ENCODE measurements at regions of chr7 and their contacts with region 1.

Region 1: GRCh38 chr7:137670199-137671071 is 176.3 kb downstream of the DGKI start:
- DNase-seq: peak; percentile 35
- ATAC-seq: peak; percentile 77
- H3K4me3 ChIP-seq: no peak overlapping the region
- H3K27ac ChIP-seq: no peak overlapping the region
- H3K4me1 ChIP-seq: 0 out of 2 replicates have a peak, but pooled peaks cover 2% of the 10 kb centered on the region
- H3K27me3 ChIP-seq: no peaks in the 10 kb centered on the region
- CTCF ChIP-seq: no peak
- EP300 ChIP-seq: no peak
- POLR2A ChIP-seq: no peak
- RAD21 ChIP-seq: peak; percentile 19; the same call in 1 of the 2 replicates

Region 2: GRCh38 chr7:137687556-137688280 is 17.3 kb after region 1 on chr7:
- CTCF ChIA-PET with region 1: interaction called, 10 read pairs
- POLR2A ChIA-PET with region 1: interaction called, 17 read pairs
- RAD21 ChIA-PET with region 1: interaction called, 26 read pairs
- SMC1A ChIA-PET with region 1: interaction called, 63 read pairs
- in situ Hi-C with region 1: no loop called
- intact Hi-C with region 1: no loop called
- DNase-seq: no peak
- ATAC-seq: no peak
- H3K4me3 ChIP-seq: no peak overlapping the region
- H3K27ac ChIP-seq: no peak overlapping the region
- H3K4me1 ChIP-seq: no peaks in the 10 kb centered on the region
- H3K27me3 ChIP-seq: no peaks in the 10 kb centered on the region
- CTCF ChIP-seq: no peak
- EP300 ChIP-seq: no peak
- POLR2A ChIP-seq: no peak
- RAD21 ChIP-seq: no peak

Region 3: DNA sequence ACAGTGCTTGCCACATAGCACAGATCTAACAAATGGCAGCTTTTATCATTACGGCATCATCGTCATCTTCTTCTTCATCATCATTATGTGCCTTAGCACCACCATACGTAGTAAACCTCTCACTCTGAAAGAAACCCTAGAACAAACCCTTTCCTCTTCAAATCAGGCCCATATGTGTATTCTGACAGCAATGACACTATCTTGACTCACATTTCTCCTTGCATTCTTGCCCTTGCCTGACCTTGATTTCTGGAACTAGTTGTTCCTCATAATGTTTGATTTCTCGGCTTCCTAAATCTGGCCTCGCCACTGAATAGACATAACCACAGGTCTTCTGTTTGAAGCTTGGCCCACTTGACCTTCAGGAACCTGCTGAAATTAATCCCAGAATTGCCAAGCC is 61.0 kb after region 1 on chr7:
- CTCF ChIA-PET with region 1: interaction called, 3 read pairs
- POLR2A ChIA-PET with region 1: interaction called, 3 read pairs
- RAD21 ChIA-PET with region 1: interaction called, 7 read pairs
- SMC1A ChIA-PET with region 1: interaction called, 23 read pairs
- in situ Hi-C with region 1: no loop called
- intact Hi-C with region 1: no loop called
- DNase-seq: no peak
- ATAC-seq: no peak
- H3K4me3 ChIP-seq: no peak overlapping the region
- H3K27ac ChIP-seq: no peak overlapping the region
- H3K4me1 ChIP-seq: no peaks in the 10 kb centered on the region
- H3K27me3 ChIP-seq: no peaks in the 10 kb centered on the region
- CTCF ChIP-seq: no peak
- EP300 ChIP-seq: no peak
- POLR2A ChIP-seq: no peak
- RAD21 ChIP-seq: no peak

Region 4: DNA sequence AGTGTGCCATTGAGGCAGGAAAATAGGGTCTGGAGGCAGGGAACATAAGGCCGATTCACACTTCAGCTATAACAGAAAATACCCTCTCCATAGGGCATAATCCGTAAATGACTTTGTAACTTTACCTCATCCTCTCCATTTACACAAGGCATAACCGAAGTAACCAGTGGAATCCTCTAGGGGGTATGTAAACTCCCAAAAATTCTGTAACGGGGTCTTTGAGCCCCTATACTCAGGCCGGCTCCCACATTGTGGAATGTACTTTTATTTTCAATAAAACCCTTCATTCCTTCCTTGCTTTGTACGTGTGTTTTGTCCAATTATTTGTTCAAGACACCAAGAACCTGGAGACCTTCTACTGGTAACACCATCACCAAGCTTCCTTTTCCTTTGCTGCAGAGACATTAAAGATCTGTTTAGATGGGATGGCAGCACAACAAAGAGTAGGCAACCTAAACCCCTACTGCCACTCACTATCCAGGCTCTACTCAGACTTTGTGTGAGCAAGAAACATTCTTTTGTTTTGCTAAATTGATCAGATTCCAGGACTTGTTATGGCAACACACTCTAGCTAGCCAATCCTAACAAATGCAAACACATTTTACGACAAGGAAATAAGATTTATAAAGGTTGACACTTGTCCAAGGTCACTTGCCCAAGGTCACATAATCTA is 77.1 kb after region 1 on chr7:
- CTCF ChIA-PET with region 1: interaction called, 3 read pairs
- POLR2A ChIA-PET with region 1: interaction called, 3 read pairs
- RAD21 ChIA-PET with region 1: interaction called, 10 read pairs
- SMC1A ChIA-PET with region 1: interaction called, 19 read pairs
- in situ Hi-C with region 1: no loop called
- intact Hi-C with region 1: no loop called
- DNase-seq: no peak
- ATAC-seq: no peak
- H3K4me3 ChIP-seq: no peak overlapping the region
- H3K27ac ChIP-seq: no peak overlapping the region
- H3K4me1 ChIP-seq: no peaks in the 10 kb centered on the region
- H3K27me3 ChIP-seq: no peaks in the 10 kb centered on the region
- CTCF ChIP-seq: no peak
- EP300 ChIP-seq: no peak
- POLR2A ChIP-seq: no peak
- RAD21 ChIP-seq: no peak

Region 5: GRCh38 chr7:137772748-137773147 is 102.3 kb after region 1 on chr7:
- CTCF ChIA-PET with region 1: interaction called, 5 read pairs
- POLR2A ChIA-PET with region 1: interaction called, 27 read pairs
- RAD21 ChIA-PET with region 1: interaction called, 18 read pairs
- SMC1A ChIA-PET with region 1: interaction called, 17 read pairs
- in situ Hi-C with region 1: no loop called
- intact Hi-C with region 1: no loop called
- DNase-seq: no peak
- ATAC-seq: peak; percentile 64
- H3K4me3 ChIP-seq: no peak overlapping the region
- H3K27ac ChIP-seq: no peak overlapping the region
- H3K4me1 ChIP-seq: no peaks in the 10 kb centered on the region
- H3K27me3 ChIP-seq: no peaks in the 10 kb centered on the region
- CTCF ChIP-seq: no peak
- EP300 ChIP-seq: no peak
- POLR2A ChIP-seq: no peak
- RAD21 ChIP-seq: no peak

Region 6: GRCh38 chr7:137820677-137821420 is 150.4 kb after region 1 on chr7:
- CTCF ChIA-PET with region 1: interaction called, 12 read pairs
- POLR2A ChIA-PET with region 1: interaction called, 9 read pairs
- RAD21 ChIA-PET with region 1: interaction called, 16 read pairs
- SMC1A ChIA-PET with region 1: interaction called, 49 read pairs
- in situ Hi-C with region 1: no loop called
- intact Hi-C with region 1: no loop called
- DNase-seq: no peak
- ATAC-seq: peak; percentile 91
- H3K4me3 ChIP-seq: no peak overlapping the region
- H3K27ac ChIP-seq: no peak overlapping the region
- H3K4me1 ChIP-seq: peaks cover 6% of the 10 kb centered on the region
- H3K27me3 ChIP-seq: no peaks in the 10 kb centered on the region
- CTCF ChIP-seq: no peak
- EP300 ChIP-seq: no peak; a peak in 1 of 4 replicates
- POLR2A ChIP-seq: no peak
- RAD21 ChIP-seq: no peak

Region 7: DNA sequence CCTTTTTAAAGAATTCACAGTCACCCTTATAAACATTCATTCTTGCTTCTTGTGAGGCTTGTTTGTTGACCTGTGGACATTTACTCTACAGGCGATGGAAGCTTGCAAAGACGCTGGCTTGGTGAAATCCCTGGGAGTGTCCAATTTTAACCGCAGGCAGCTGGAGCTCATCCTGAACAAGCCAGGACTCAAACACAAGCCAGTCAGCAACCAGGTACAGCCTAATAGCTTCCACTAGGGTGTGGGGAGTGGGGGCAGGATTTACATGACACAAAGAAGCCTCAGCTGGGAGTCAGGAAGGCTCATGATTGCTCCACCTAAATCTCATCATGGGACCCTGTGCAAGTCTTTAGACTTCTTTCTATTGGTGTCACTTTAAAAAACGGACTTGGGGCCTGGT is 434.8 kb after region 1 on chr7:
- CTCF ChIA-PET with region 1: no interaction called
- POLR2A ChIA-PET with region 1: no interaction called
- RAD21 ChIA-PET with region 1: no interaction called
- SMC1A ChIA-PET with region 1: no interaction called
- in situ Hi-C with region 1: no loop called
- intact Hi-C with region 1: no loop called
- DNase-seq: no peak
- ATAC-seq: no peak
- H3K4me3 ChIP-seq: no peak overlapping the region
- H3K27ac ChIP-seq: no peak overlapping the region
- H3K4me1 ChIP-seq: no peaks in the 10 kb centered on the region
- H3K27me3 ChIP-seq: no peaks in the 10 kb centered on the region
- CTCF ChIP-seq: no peak
- EP300 ChIP-seq: no peak
- POLR2A ChIP-seq: no peak
- RAD21 ChIP-seq: no peak